ENCODE measurements at regions of chr3 and their contacts with region 1.

Region 1: DNA sequence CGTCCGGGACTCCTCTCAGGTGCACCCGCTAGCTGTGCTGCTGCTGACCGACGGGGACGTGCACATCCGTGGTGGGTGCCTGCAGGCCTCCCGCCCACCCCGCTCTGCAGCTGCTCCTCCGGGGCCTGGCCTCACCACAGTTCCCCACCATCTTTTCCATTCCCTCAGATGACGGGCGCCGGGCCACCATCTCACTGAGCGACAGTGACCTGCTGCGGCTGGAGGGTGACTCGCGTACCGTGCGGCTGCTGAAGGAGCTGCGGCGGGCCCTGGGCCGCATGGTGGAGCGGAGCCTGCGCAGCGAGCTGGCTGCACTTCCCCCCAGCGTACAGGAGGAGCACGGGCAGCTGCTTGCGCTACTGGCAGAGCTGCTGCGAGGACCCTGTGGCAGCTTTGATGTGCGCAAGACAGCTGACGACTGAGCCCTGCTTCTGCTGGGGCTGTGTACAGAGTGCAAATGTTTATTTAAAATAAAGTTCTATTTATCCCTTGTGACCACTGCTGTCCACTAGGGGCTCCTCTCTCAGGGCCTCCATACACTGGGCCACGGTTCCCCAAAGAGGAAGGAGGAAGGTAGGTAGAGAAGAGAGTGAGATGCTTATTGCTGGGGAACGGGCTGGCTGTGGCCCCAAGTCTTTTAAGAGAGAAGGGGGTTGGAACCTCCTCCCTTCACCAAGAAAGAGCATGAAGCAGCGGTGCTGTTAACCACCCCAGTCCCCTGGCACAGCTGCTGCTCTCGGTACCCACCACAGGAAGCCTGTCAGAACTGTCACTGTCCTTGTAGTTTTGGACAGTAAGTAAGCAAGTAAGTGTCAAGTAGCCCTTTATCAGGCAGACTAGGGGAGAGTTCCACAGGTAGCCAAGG is 47.0 kb downstream of the DHX30 start:
- DNase-seq: peak in 2 of 5 donors; percentile 54 to 73
- H3K4me3 ChIP-seq: no peak overlapping the region
- H3K27ac ChIP-seq: no peak overlapping the region
- H3K4me1 ChIP-seq: no peaks in the 10 kb centered on the region
- H3K27me3 ChIP-seq: no peaks in the 10 kb centered on the region
- CTCF ChIP-seq: peak; percentile 5

Region 2: DNA sequence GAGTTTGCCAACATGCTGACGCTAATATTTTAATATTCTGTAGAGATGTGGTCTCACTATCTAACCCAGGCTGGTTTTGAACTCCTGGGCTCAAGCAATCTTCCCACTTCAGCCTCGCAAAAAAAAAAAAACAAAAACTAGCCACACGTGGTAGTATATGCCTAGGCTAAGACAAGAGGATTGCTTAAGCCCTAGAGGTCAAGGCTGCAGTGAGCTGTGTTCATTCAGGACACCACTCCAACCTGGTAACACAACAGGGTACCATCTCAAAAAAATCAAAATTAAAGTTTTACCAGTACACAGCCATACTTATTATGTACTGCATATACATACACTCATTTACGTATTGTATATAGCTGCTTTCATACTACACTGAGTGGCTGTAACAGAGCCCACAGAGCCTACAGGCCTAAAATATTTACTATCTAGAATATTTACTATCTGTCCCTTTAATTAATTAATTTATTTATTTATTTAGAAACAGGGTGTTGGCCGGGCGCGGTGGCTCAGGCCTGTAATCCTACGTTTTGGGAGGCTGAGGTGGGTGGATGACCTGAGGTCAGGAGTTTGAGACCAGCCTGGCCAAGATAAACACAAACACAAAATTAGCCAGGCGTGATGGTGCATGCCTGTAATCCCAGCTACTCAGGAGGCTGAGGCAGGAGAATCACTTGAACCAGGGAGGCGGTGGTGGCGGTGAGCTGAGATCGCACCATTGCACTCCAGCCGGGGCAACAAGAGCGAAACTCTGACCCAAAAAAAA is 91.5 kb before region 1 on chr3:
- intact Hi-C with region 1: no loop called
- DNase-seq: no peak
- H3K4me3 ChIP-seq: no peak overlapping the region
- H3K27ac ChIP-seq: no peak overlapping the region
- H3K4me1 ChIP-seq: no peaks in the 10 kb centered on the region
- H3K27me3 ChIP-seq: no peaks in the 10 kb centered on the region
- CTCF ChIP-seq: no peak

Region 3: GRCh38 chr3:47989981-47990440 is 140.1 kb after region 1 on chr3:
- intact Hi-C with region 1: loop called (anchors 10 kb)
- DNase-seq: peak; percentile 76 to 91 (median 81)
- H3K4me3 ChIP-seq: no peak overlapping the region
- H3K27ac ChIP-seq: no peak overlapping the region
- H3K4me1 ChIP-seq: peaks cover 0 to 3% (median 0%) of the 10 kb centered on the region in 3 donors
- H3K27me3 ChIP-seq: no peaks in the 10 kb centered on the region
- CTCF ChIP-seq: peak; percentile 97

Region 4: GRCh38 chr3:48013288-48013980 is 163.5 kb after region 1 on chr3:
- intact Hi-C with region 1: no loop called
- DNase-seq: peak in 1 of 5 donors; percentile 22
- H3K4me3 ChIP-seq: peak overlapping the region in 1 of 3 donors; percentile 18
- H3K27ac ChIP-seq: peak overlapping the region; percentile 20 to 53
- H3K4me1 ChIP-seq: peaks cover 14 to 49% (median 32%) of the 10 kb centered on the region in 3 donors
- H3K27me3 ChIP-seq: no peaks in the 10 kb centered on the region
- CTCF ChIP-seq: no peak

Region 5: GRCh38 chr3:48151058-48151806 is 301.3 kb after region 1 on chr3:
- intact Hi-C with region 1: loop called (anchors 10 kb)
- DNase-seq: peak; percentile 83 to 93 (median 86)
- H3K4me3 ChIP-seq: no peak overlapping the region
- H3K27ac ChIP-seq: peak overlapping the region; percentile 26 to 36
- H3K4me1 ChIP-seq: peaks cover 3 to 11% (median 5%) of the 10 kb centered on the region in 3 donors
- H3K27me3 ChIP-seq: no peaks in the 10 kb centered on the region
- CTCF ChIP-seq: peak; percentile 66

Measured in kidney (tissue), 22 donors.